ENCODE measurements at regions of chr6 and their contacts with region 1.

Region 1: GRCh38 chr6:15754035-15754705 is 91.3 kb upstream of the DTNBP1 start:
- DNase-seq: peak in 1 of 2 experiments; percentile 27
- H3K4me3 ChIP-seq: no peak overlapping the region
- H3K27ac ChIP-seq: no peak overlapping the region
- H3K4me1 ChIP-seq: no peaks in the 10 kb centered on the region
- H3K27me3 ChIP-seq: peaks cover 36% of the 10 kb centered on the region
- CTCF ChIP-seq: no peak

Region 2: GRCh38 chr6:15608396-15608795 is 145.8 kb before region 1 on chr6:
- CTCF ChIA-PET with region 1: no interaction called
- POLR2A ChIA-PET with region 1: no interaction called
- intact Hi-C with region 1: no loop called
- DNase-seq: peak in 1 of 2 experiments; percentile 2
- H3K4me3 ChIP-seq: no peak overlapping the region
- H3K27ac ChIP-seq: peak overlapping the region; percentile 3; the same call in 1 of the 2 replicates
- H3K4me1 ChIP-seq: no peaks in the 10 kb centered on the region
- H3K27me3 ChIP-seq: no peaks in the 10 kb centered on the region
- CTCF ChIP-seq: no peak

Region 3: GRCh38 chr6:15739867-15740266 is 14.3 kb before region 1 on chr6:
- CTCF ChIA-PET with region 1: no interaction called
- POLR2A ChIA-PET with region 1: no interaction called
- intact Hi-C with region 1: no loop called
- DNase-seq: no peak
- H3K4me3 ChIP-seq: no peak overlapping the region
- H3K27ac ChIP-seq: no peak overlapping the region
- H3K4me1 ChIP-seq: no peaks in the 10 kb centered on the region
- H3K27me3 ChIP-seq: peaks cover 12% of the 10 kb centered on the region
- CTCF ChIP-seq: no peak

Region 4: GRCh38 chr6:15817121-15817520 is 63.0 kb after region 1 on chr6:
- CTCF ChIA-PET with region 1: no interaction called
- POLR2A ChIA-PET with region 1: no interaction called
- intact Hi-C with region 1: no loop called
- DNase-seq: no peak
- H3K4me3 ChIP-seq: no peak overlapping the region
- H3K27ac ChIP-seq: no peak overlapping the region
- H3K4me1 ChIP-seq: no peaks in the 10 kb centered on the region
- H3K27me3 ChIP-seq: peaks cover 85% of the 10 kb centered on the region
- CTCF ChIP-seq: no peak

Region 5: GRCh38 chr6:15827496-15828255 is 73.5 kb after region 1 on chr6:
- CTCF ChIA-PET with region 1: no interaction called
- POLR2A ChIA-PET with region 1: interaction called, 14 read pairs
- intact Hi-C with region 1: no loop called
- DNase-seq: no peak
- H3K4me3 ChIP-seq: no peak overlapping the region
- H3K27ac ChIP-seq: no peak overlapping the region
- H3K4me1 ChIP-seq: no peaks in the 10 kb centered on the region
- H3K27me3 ChIP-seq: peaks cover 84% of the 10 kb centered on the region
- CTCF ChIP-seq: no peak

Measured in PC-9 (cell line).